CD8-positive, alpha-beta T cell (primary cell): ENCODE measurements at regions of chr4 and their contacts with region 1.

Region 1: GRCh38 chr4:7067452-7068278 is at the start of gene GRPEL1:
- DNase-seq: peak; percentile 100
- ATAC-seq: peak; percentile 92
- H3K4me3 ChIP-seq: peak within 1 kb of the TSS; percentile 86 to 87
- H3K4me3 Mint-ChIP-seq: peak within 1 kb of the TSS; percentile 95
- H3K27ac ChIP-seq: peak within 1 kb of the TSS; percentile 83 to 89
- H3K27ac Mint-ChIP-seq: peak within 1 kb of the TSS; percentile 97
- H3K4me1 ChIP-seq: peaks cover 35% of the 10 kb centered on the region
- H3K4me1 Mint-ChIP-seq: peaks cover 46% of the 10 kb centered on the region
- H3K27me3 ChIP-seq: no peaks in the 10 kb centered on the region
- H3K27me3 Mint-ChIP-seq: no peaks in the 10 kb centered on the region
- CTCF ChIP-seq: no peak
- total RNA-seq, gene GRPEL1: 61.1 to 61.5 TPM

Region 2: DNA sequence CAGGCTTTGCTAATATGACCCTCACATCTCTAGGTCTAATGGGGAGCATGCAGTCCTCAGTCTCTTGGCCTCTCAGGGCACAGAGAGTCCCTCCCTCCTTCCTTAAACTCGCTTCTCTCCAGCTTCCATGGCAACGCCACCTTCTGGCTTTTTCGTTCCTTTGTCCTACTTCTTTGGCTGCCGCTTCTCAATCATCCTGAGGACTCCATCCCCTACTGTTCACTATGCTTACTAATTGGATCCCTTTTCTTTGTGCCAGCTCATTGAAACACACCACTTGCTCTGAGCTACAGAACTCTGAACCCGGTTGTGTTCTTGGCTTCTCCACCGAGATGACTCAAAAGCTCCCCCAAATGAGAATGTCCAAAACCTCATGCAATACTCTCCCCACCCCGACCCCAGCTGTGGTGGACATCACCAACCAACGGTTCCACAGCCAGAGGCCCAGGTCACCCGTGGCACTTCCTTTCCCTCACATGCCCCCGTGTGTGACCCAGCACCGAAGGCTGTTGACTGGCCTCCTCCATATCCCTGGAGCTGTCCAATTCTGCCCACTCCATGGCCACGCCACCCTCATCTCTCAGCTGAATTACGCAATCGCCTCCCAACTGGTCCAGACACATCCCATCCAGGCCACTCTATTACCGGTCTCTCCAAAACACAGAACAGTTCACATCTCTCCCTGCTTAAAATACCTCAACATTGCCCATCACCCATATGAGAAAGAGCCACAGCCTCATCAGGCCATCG is 1209.5 kb before region 1 on chr4:
- CTCF ChIA-PET with region 1: no interaction called
- POLR2A ChIA-PET with region 1: no interaction called
- intact Hi-C with region 1: no loop called
- DNase-seq: no peak
- ATAC-seq: no peak
- H3K4me3 ChIP-seq: no peak overlapping the region
- H3K4me3 Mint-ChIP-seq: no peak overlapping the region
- H3K27ac ChIP-seq: no peak overlapping the region
- H3K27ac Mint-ChIP-seq: no peak overlapping the region
- H3K4me1 ChIP-seq: no peaks in the 10 kb centered on the region
- H3K4me1 Mint-ChIP-seq: no peaks in the 10 kb centered on the region
- H3K27me3 ChIP-seq: no peaks in the 10 kb centered on the region
- H3K27me3 Mint-ChIP-seq: no peaks in the 10 kb centered on the region
- CTCF ChIP-seq: no peak

Region 3: GRCh38 chr4:6574747-6575502 is 492.7 kb before region 1 on chr4 and contains the start of gene MAN2B2:
- CTCF ChIA-PET with region 1: no interaction called
- POLR2A ChIA-PET with region 1: interaction called, 4 read pairs
- intact Hi-C with region 1: loop called in 1 of 2 experiments (anchors 10 kb)
- DNase-seq: peak; percentile 62 to 89 (median 82)
- ATAC-seq: peak; percentile 94
- H3K4me3 ChIP-seq: peak within 1 kb of the TSS; percentile 99
- H3K4me3 Mint-ChIP-seq: peak within 1 kb of the TSS; percentile 91
- H3K27ac ChIP-seq: peak within 1 kb of the TSS; percentile 80 to 85
- H3K27ac Mint-ChIP-seq: peak within 1 kb of the TSS; percentile 84
- H3K4me1 ChIP-seq: peaks cover 22% of the 10 kb centered on the region
- H3K4me1 Mint-ChIP-seq: peaks cover 21% of the 10 kb centered on the region
- H3K27me3 ChIP-seq: no peaks in the 10 kb centered on the region
- H3K27me3 Mint-ChIP-seq: no peaks in the 10 kb centered on the region
- CTCF ChIP-seq: no peak
- total RNA-seq, gene MAN2B2: 26.4 to 26.7 TPM

Region 4: DNA sequence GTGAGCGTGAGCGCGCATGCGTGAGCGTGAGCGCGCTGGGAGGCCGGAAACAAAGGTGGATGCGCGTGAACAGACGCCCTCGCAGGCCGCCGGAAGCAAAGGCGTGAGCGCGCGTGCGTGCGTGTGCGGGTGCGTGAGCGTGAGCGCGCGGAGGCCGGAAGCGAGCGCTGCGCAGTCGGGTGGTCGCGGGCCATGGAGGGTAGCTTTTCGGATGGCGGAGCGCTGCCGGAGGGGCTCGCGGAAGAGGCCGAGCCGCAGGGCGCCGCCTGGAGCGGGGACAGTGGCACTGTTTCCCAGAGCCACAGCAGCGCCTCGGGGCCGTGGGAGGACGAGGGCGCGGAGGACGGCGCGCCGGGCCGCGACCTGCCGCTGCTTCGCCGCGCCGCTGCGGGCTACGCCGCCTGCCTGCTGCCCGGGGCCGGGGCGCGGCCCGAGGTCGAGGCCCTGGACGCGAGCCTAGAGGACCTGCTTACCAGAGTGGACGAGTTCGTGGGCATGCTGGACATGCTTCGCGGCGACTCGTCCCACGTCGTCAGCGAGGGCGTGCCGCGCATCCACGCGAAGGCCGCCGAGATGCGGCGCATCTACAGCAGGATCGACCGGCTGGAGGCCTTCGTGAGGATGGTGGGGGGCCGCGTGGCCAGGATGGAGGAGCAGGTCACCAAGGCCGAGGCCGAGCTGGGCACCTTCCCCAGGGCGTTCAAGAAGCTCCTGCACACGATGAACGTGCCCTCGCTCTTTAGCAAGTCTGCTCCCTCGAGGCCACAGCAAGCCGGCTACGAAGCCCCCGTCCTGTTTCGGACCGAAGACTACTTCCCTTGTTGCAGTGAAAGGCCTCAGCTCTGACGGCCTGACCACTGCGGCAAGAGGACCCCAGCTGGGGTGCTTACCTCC is 351.4 kb before region 1 on chr4 and contains the start of gene BLOC1S4:
- CTCF ChIA-PET with region 1: interaction called, 68 read pairs
- POLR2A ChIA-PET with region 1: interaction called, 6 read pairs
- intact Hi-C with region 1: loop called (anchors 1 kb)
- DNase-seq: peak; percentile 77 to 98 (median 88)
- ATAC-seq: peak; percentile 83
- H3K4me3 ChIP-seq: peak within 1 kb of the TSS; percentile 74 to 81
- H3K4me3 Mint-ChIP-seq: peak within 1 kb of the TSS; percentile 95
- H3K27ac ChIP-seq: peak within 1 kb of the TSS; percentile 75 to 80
- H3K27ac Mint-ChIP-seq: peak within 1 kb of the TSS; percentile 97
- H3K4me1 ChIP-seq: peaks cover 25% of the 10 kb centered on the region
- H3K4me1 Mint-ChIP-seq: peaks cover 48% of the 10 kb centered on the region
- H3K27me3 ChIP-seq: no peaks in the 10 kb centered on the region
- H3K27me3 Mint-ChIP-seq: no peaks in the 10 kb centered on the region
- CTCF ChIP-seq: peak; percentile 18
- total RNA-seq, gene BLOC1S4: 29.7 to 30.7 TPM

Region 5: DNA sequence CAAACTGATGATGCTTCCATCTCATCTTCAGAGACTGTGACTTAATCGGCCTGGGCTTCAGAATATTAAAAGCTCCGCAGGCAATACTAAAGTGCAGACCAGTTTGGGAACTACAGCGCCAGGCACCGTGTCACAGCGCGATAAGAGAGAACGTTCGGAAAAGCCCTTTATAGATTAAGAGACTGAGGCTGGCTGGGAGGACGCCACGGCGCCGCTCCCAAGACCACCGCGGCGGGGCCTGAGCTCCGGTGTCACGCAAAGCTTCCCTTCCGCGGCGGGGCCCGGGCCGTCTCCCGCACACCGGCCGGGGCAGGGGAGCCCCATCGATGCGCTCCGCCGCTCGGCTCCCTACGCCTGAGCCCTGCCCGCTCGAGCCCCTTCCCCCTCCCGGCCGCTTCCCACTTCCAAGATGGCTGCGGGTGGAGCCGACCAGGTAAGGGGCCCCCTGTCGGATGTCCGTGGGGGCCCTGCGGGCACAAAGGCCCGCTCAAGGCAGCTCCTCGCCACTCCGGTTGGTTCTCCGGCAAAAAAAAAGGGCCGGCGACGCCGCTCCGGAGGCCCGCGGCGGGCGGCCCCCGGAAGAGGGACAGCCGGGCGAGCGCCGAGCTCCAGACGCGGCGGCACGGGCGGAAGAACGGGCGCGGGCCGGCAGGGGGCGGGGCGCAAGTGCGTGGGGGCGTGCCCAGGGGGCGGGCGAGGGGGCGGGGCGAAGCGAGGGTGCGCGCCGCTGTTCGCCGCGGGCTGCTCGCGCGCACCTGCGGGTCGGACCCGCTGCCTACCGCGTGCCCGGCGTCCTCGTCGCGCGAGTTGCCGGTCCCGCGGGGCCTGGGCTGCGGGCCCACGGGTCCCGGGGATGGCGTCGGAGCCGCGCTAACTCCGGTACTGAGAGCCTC is 158.3 kb before region 1 on chr4 and contains the start of gene TBC1D14:
- CTCF ChIA-PET with region 1: interaction called, 50 read pairs
- POLR2A ChIA-PET with region 1: interaction called, 20 read pairs
- intact Hi-C with region 1: loop called (anchors 1 kb)
- DNase-seq: peak; percentile 72 to 94 (median 84)
- ATAC-seq: peak; percentile 85
- H3K4me3 ChIP-seq: peak within 1 kb of the TSS; percentile 78 to 80
- H3K4me3 Mint-ChIP-seq: peak within 1 kb of the TSS; percentile 92
- H3K27ac ChIP-seq: peak within 1 kb of the TSS; percentile 81 to 98
- H3K27ac Mint-ChIP-seq: peak within 1 kb of the TSS; percentile 91
- H3K4me1 ChIP-seq: peaks cover 37% of the 10 kb centered on the region
- H3K4me1 Mint-ChIP-seq: peaks cover 53% of the 10 kb centered on the region
- H3K27me3 ChIP-seq: no peaks in the 10 kb centered on the region
- H3K27me3 Mint-ChIP-seq: no peaks in the 10 kb centered on the region
- CTCF ChIP-seq: no peak
- total RNA-seq, gene TBC1D14: 29.2 to 30.9 TPM

Region 6: GRCh38 chr4:6986781-6987587 is 80.7 kb before region 1 on chr4:
- CTCF ChIA-PET with region 1: interaction called, 31 read pairs
- POLR2A ChIA-PET with region 1: interaction called, 24 read pairs
- intact Hi-C with region 1: loop called (anchors 1 kb)
- DNase-seq: peak; percentile 87 to 97 (median 93)
- ATAC-seq: peak; percentile 92
- H3K4me3 ChIP-seq: peak overlapping the region; percentile 91 to 94
- H3K4me3 Mint-ChIP-seq: peak overlapping the region; percentile 94
- H3K27ac ChIP-seq: peak overlapping the region; percentile 78 to 88
- H3K27ac Mint-ChIP-seq: peak overlapping the region; percentile 98
- H3K4me1 ChIP-seq: peaks cover 55% of the 10 kb centered on the region
- H3K4me1 Mint-ChIP-seq: peaks cover 81% of the 10 kb centered on the region
- H3K27me3 ChIP-seq: no peaks in the 10 kb centered on the region
- H3K27me3 Mint-ChIP-seq: no peaks in the 10 kb centered on the region
- CTCF ChIP-seq: no peak

Region 7: DNA sequence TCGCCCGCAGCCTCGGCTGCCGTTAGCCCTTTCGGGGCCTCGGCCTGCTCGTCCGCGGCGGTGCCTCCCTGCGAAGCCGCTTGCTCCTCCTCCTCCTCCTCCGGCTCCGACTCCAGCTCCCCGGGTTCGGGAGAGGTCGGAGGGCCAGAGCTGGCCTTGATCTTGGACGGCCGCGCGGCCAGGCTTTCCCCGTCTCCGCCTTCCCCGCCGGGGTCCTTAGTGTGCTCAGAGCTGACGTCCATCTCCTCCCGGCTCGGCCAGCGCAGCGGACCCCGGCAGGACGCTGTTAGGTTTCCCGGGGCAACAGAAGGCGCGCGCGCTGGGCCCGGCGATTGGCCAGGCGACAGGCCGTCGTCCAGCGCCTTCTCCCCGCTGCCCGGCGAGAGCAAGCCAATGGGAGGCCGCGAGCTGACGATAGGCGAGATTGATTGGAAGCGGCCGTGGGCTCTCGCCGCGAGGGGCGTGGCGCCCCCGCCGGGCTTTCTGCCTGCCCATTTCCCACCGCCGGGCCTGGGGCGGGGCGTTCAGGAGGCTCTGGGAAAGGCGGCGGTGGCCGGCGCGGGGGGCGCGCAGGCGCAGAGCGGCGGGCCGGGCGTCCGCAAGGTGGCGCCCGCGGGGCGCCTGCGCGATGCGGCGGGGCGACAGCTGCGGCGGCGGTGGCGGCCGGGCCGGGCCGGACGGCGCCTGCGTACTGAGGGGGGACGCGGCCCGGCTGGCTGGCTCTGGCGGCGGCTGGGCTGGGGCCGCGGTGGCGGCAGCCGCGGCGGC is 24.8 kb before region 1 on chr4 and contains the start of gene TADA2B:
- CTCF ChIA-PET with region 1: interaction called, 79 read pairs
- POLR2A ChIA-PET with region 1: interaction called, 103 read pairs
- intact Hi-C with region 1: loop called (anchors 1 kb)
- DNase-seq: peak; percentile 74 to 95 (median 89)
- ATAC-seq: peak; percentile 76
- H3K4me3 ChIP-seq: peak within 1 kb of the TSS; percentile 83 to 94
- H3K4me3 Mint-ChIP-seq: peak within 1 kb of the TSS; percentile 91
- H3K27ac ChIP-seq: peak within 1 kb of the TSS; percentile 63 to 84
- H3K27ac Mint-ChIP-seq: peak within 1 kb of the TSS; percentile 88
- H3K4me1 ChIP-seq: peaks cover 40% of the 10 kb centered on the region
- H3K4me1 Mint-ChIP-seq: peaks cover 44% of the 10 kb centered on the region
- H3K27me3 ChIP-seq: no peaks in the 10 kb centered on the region
- H3K27me3 Mint-ChIP-seq: no peaks in the 10 kb centered on the region
- CTCF ChIP-seq: no peak
- total RNA-seq, gene TADA2B: 41.9 to 45.4 TPM

Region 8: DNA sequence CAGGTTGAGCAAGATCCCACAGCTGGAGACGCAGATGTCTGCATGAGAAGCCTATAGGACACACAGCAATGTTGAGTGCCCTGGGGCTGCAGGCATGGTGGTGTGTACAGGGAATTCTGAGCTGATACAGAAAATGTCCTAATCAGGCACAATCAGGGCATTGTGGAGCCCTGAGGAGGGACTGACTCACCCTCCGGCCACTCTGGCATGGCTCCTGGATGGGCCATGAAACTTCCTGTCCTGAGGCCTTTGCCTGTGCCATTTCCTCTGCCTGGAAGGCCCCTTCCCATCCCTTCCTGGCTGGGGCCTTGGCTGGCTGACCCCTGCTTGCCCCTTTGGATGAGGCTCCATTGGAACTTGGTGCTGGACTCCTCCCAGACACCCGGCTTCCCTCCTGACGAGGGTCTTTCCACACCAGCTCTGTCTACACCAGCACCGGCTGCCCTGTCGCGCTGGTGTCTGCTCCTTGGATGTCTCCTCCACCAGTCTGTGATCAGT is 888.7 kb after region 1 on chr4:
- CTCF ChIA-PET with region 1: no interaction called
- POLR2A ChIA-PET with region 1: no interaction called
- intact Hi-C with region 1: no loop called
- DNase-seq: no peak
- ATAC-seq: no peak
- H3K4me3 ChIP-seq: no peak overlapping the region
- H3K4me3 Mint-ChIP-seq: no peak overlapping the region
- H3K27ac ChIP-seq: no peak overlapping the region
- H3K27ac Mint-ChIP-seq: no peak overlapping the region
- H3K4me1 ChIP-seq: peaks cover 12% of the 10 kb centered on the region
- H3K4me1 Mint-ChIP-seq: peaks cover 12% of the 10 kb centered on the region
- H3K27me3 ChIP-seq: no peaks in the 10 kb centered on the region
- H3K27me3 Mint-ChIP-seq: no peaks in the 10 kb centered on the region
- CTCF ChIP-seq: no peak